A549 (cell line): ENCODE measurements at regions of chr1 and their contacts with region 1.

Region 1: GRCh38 chr1:211698161-211699026 is 23.0 kb upstream of the NEK2 start:
- DNase-seq: peak; percentile 81
- ATAC-seq: peak; percentile 95 to 99
- H3K4me3 ChIP-seq: no peak overlapping the region
- H3K27ac ChIP-seq: peak overlapping the region; percentile 66 to 80
- H3K4me1 ChIP-seq: peaks cover 8% of the 10 kb centered on the region; the same call in 2 of the 3 replicates
- CTCF ChIP-seq: peak; percentile 97
- EP300 ChIP-seq: no peak
- POLR2A ChIP-seq: no peak
- RAD21 ChIP-seq: peak; percentile 99

Region 2: GRCh38 chr1:211647711-211648121 is 50.7 kb before region 1 on chr1:
- CTCF ChIA-PET with region 1: no interaction called
- POLR2A ChIA-PET with region 1: no interaction called
- DNase-seq: no peak
- ATAC-seq: no peak
- H3K4me3 ChIP-seq: no peak overlapping the region
- H3K27ac ChIP-seq: peak overlapping the region; percentile 54 to 81; a peak in 5 of 6 replicates
- H3K4me1 ChIP-seq: peaks cover 76% of the 10 kb centered on the region
- CTCF ChIP-seq: no peak
- EP300 ChIP-seq: no peak
- POLR2A ChIP-seq: no peak
- RAD21 ChIP-seq: no peak

Region 3: GRCh38 chr1:211675230-211676105 is 22.9 kb before region 1 on chr1 and contains the start of gene NEK2:
- CTCF ChIA-PET with region 1: interaction called, 100 read pairs
- POLR2A ChIA-PET with region 1: no interaction called
- DNase-seq: peak; percentile 95 to 96
- ATAC-seq: peak; percentile 98 to 99
- H3K4me3 ChIP-seq: peak within 1 kb of the TSS; percentile 92
- H3K27ac ChIP-seq: peak within 1 kb of the TSS; percentile 78 to 84
- H3K4me1 ChIP-seq: peaks cover 19% of the 10 kb centered on the region; the same call in 2 of the 3 replicates
- CTCF ChIP-seq: no peak
- EP300 ChIP-seq: no peak
- POLR2A ChIP-seq: no peak
- RAD21 ChIP-seq: no peak
- polyA plus RNA-seq, gene NEK2: 41.0 and 65.3 TPM in 2 replicates

Region 4: GRCh38 chr1:211735208-211736170 is 37.1 kb after region 1 on chr1:
- CTCF ChIA-PET with region 1: interaction called, 35 read pairs
- POLR2A ChIA-PET with region 1: no interaction called
- DNase-seq: peak; percentile 95
- ATAC-seq: peak; percentile 89
- H3K4me3 ChIP-seq: peak overlapping the region; percentile 23; the same call in 1 of the 3 replicates
- H3K27ac ChIP-seq: peak overlapping the region; percentile 90 to 92
- H3K4me1 ChIP-seq: peaks cover 58% of the 10 kb centered on the region
- CTCF ChIP-seq: no peak
- EP300 ChIP-seq: peak; percentile 35 to 66; a peak in 3 of 5 replicates
- POLR2A ChIP-seq: no peak
- RAD21 ChIP-seq: peak; percentile 12 to 41; a peak in 3 of 5 replicates

Region 5: DNA sequence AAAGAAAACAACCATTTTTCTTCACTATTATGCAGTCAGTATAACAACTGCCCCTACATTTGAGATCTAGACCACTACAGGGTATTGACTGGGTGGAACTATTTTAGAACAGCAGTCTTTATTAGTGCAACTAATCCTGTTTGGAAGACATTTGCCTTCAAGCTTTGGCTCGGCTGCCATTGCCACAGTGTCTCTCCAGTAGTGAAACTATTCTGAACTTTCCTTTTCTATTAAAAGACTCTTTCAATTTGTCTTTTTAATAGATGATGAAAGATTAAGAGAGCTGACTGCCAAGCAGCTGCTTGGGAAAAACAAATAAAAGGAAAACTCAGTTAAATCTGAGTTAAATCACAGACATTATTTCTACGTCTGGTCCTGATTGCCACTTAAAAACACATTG is 82.9 kb after region 1 on chr1:
- CTCF ChIA-PET with region 1: interaction called, 11 read pairs
- POLR2A ChIA-PET with region 1: no interaction called
- DNase-seq: no peak
- ATAC-seq: no peak
- H3K4me3 ChIP-seq: no peak overlapping the region
- H3K27ac ChIP-seq: no peak overlapping the region
- H3K4me1 ChIP-seq: peaks cover 15% of the 10 kb centered on the region
- CTCF ChIP-seq: no peak
- EP300 ChIP-seq: no peak
- POLR2A ChIP-seq: no peak
- RAD21 ChIP-seq: no peak

Region 6: DNA sequence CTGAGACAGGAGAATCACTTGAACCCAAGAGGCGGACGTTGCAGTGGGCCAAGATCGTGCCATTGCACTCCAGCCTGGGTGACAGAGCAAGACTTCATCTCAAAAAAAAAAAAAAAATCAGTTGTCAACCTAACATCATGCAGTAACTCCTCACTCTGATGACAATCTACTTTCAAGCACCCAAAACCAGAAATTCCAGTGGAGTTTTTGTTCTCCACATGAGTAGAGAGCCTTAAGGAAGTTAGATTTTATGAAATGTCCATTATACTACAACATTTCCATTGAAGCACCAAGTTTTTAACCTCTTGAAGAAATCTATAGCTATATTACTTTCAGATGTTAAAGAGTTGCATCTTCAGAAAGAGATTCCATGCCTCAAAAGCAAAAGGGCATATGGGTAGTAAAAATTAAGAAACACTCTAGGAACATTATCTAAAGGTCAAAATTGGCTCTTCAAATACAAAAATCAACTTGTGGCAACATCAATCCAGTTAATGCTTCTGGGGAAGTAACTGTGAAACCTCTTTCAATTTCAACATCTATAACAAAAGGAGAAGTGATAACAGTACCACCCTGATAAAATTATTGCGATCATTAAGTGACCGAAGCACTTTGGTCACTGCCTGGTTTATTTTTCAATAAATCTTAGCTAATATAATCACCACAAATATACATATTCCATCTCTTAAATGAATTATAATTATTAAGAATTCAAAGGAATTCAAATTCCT is 124.4 kb after region 1 on chr1:
- CTCF ChIA-PET with region 1: interaction called, 38 read pairs
- POLR2A ChIA-PET with region 1: no interaction called
- DNase-seq: no peak
- ATAC-seq: no peak
- H3K4me3 ChIP-seq: no peak overlapping the region
- H3K27ac ChIP-seq: no peak overlapping the region
- H3K4me1 ChIP-seq: peaks cover 31% of the 10 kb centered on the region
- CTCF ChIP-seq: no peak
- EP300 ChIP-seq: no peak
- POLR2A ChIP-seq: no peak
- RAD21 ChIP-seq: no peak

Region 7: GRCh38 chr1:211935448-211935970 is 237.1 kb after region 1 on chr1:
- CTCF ChIA-PET with region 1: interaction called, 14 read pairs
- POLR2A ChIA-PET with region 1: no interaction called
- DNase-seq: no peak
- ATAC-seq: no peak
- H3K4me3 ChIP-seq: no peak overlapping the region
- H3K27ac ChIP-seq: 0 out of 6 replicates have a peak overlapping the region, but pooled peaks of 1 of the 2 experiments have one; percentile 15
- H3K4me1 ChIP-seq: no peaks in the 10 kb centered on the region
- CTCF ChIP-seq: no peak
- EP300 ChIP-seq: no peak
- POLR2A ChIP-seq: no peak
- RAD21 ChIP-seq: no peak